ENCODE measurements at regions of chr17 and their contacts with region 1.

Region 1: GRCh38 chr17:19260958-19261357 is 23.8 kb downstream of the EPN2 start:
- DNase-seq: no peak
- ATAC-seq: no peak
- H3K4me3 ChIP-seq: no peak overlapping the region
- H3K27ac ChIP-seq: no peak overlapping the region
- H3K4me1 ChIP-seq: peaks cover 15 to 99% (median 68%) of the 10 kb centered on the region in 9 donors
- H3K27me3 ChIP-seq: no peaks in the 10 kb centered on the region
- CTCF ChIP-seq: peak in 4 of 9 donors; percentile 9 to 19 (median 15)

Region 2: DNA sequence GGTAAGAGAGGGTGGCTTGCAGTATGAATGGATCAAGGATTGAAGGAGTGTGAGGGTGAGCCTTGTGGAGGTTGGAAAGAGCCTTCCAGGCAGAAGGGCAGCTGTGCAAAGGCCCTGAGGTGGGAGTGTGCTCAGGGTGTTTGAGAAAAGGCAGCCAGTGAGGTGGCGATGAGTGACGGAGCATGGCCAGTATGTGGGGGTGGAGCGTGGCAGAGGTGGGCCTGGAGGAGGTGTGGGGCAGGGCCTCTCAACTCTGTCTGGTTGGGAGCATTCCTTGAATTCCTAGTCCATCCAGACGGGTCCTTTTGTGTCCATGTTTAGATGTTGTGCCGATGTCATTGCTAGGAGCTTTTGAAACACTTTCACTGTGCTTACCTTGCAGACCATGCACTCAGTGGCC is 27.5 kb after region 1 on chr17:
- intact Hi-C with region 1: no loop called
- DNase-seq: no peak
- ATAC-seq: no peak
- H3K4me3 ChIP-seq: no peak overlapping the region
- H3K27ac ChIP-seq: no peak overlapping the region
- H3K4me1 ChIP-seq: peaks cover 7 to 77% (median 52%) of the 10 kb centered on the region in 9 donors
- H3K27me3 ChIP-seq: peaks cover 0 to 10% (median 0%) of the 10 kb centered on the region in 7 donors
- CTCF ChIP-seq: no peak

Region 3: GRCh38 chr17:19304209-19304608 is 43.3 kb after region 1 on chr17:
- intact Hi-C with region 1: loop called in 1 of 10 experiments (anchors 5 kb)
- DNase-seq: peak in 1 of 2 donors; percentile 69
- ATAC-seq: peak; percentile 45 to 89 (median 77)
- H3K4me3 ChIP-seq: no peak overlapping the region
- H3K27ac ChIP-seq: peak overlapping the region; percentile 46 to 89 (median 77)
- H3K4me1 ChIP-seq: peaks cover 13 to 73% (median 64%) of the 10 kb centered on the region in 9 donors
- H3K27me3 ChIP-seq: peaks cover 0 to 67% (median 0%) of the 10 kb centered on the region in 7 donors
- CTCF ChIP-seq: no peak

Region 4: DNA sequence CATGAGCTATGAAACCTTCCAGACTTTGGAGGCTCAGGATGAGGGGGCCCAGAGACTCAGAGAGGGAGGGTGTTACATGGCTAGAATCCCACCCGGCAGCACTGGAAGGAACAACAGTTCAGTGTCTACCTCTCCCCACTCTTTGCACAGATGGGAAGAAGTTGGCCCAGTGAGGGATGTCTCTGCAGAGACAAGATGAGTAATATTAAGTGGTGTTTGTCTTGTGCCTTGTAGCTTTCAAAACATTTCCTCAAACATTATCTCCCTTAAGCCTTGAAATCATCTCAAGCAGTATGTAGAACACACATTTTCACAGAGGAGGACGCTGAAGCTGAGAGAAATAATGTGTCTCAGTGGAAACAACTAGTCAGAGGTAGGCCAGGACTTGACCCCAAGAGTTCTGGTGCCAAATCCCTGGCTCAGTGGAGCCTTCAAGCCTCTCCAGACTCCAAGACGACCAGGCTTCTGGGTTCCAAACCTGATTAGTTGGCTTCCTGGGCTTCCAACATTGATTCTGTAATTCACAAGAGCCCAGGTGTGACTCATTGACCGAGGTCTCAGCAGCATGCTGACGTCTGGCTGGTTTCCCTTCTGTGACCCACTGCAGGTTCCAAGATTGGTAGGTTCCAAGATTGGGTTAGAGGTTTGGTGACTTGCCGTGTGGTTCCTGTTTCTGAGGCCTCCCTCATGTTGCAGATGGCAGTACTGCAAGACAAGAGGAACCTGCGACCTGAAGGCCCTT is 157.5 kb after region 1 on chr17:
- intact Hi-C with region 1: no loop called
- DNase-seq: no peak
- ATAC-seq: peak in 3 of 8 donors; percentile 24 to 45 (median 36)
- H3K4me3 ChIP-seq: no peak overlapping the region
- H3K27ac ChIP-seq: peak overlapping the region in 1 of 10 donors; percentile 24
- H3K4me1 ChIP-seq: peaks cover 0 to 4% (median 0%) of the 10 kb centered on the region in 9 donors
- H3K27me3 ChIP-seq: peaks cover 0 to 5% (median 0%) of the 10 kb centered on the region in 7 donors
- CTCF ChIP-seq: peak in 1 of 9 donors; percentile 6